Ascending aorta (tissue), 2 donors: ENCODE measurements at regions of chr1 and their contacts with region 1.

Region 1: GRCh38 chr1:202009326-202010179 is 834 bp upstream of the ELF3 start:
- DNase-seq: peak in 1 of 2 donors; percentile 91
- H3K4me3 ChIP-seq: no peak overlapping the region
- H3K27ac ChIP-seq: no peak overlapping the region
- H3K4me1 ChIP-seq: no peaks in the 10 kb centered on the region
- H3K27me3 ChIP-seq: no peaks in the 10 kb centered on the region
- CTCF ChIP-seq: peak; percentile 78 to 87 (median 78)

Region 2: GRCh38 chr1:202034683-202035462 is 25.3 kb after region 1 on chr1:
- intact Hi-C with region 1: loop called (anchors 2 kb)
- DNase-seq: peak; percentile 81 to 96
- H3K4me3 ChIP-seq: no peak overlapping the region
- H3K27ac ChIP-seq: peak overlapping the region; percentile 60 to 83
- H3K4me1 ChIP-seq: peaks cover 4 to 7% of the 10 kb centered on the region in 2 donors
- H3K27me3 ChIP-seq: no peaks in the 10 kb centered on the region
- CTCF ChIP-seq: no peak

Region 3: GRCh38 chr1:202122639-202123335 is 113.2 kb after region 1 on chr1 and contains the start of gene GPR37L1:
- intact Hi-C with region 1: loop called (anchors 1 kb)
- DNase-seq: peak in 1 of 2 donors; percentile 73
- H3K4me3 ChIP-seq: no peak within 1 kb of the TSS
- H3K27ac ChIP-seq: no peak within 1 kb of the TSS
- H3K4me1 ChIP-seq: no peaks in the 10 kb centered on the region
- H3K27me3 ChIP-seq: no peaks in the 10 kb centered on the region
- CTCF ChIP-seq: peak; percentile 35 to 64 (median 45)
- total RNA-seq, gene GPR37L1: not detected

Region 4: GRCh38 chr1:202135221-202135721 is 125.7 kb after region 1 on chr1:
- intact Hi-C with region 1: loop called (anchors 1 kb)
- DNase-seq: peak in 1 of 2 donors; percentile 75
- H3K4me3 ChIP-seq: no peak overlapping the region
- H3K27ac ChIP-seq: peak overlapping the region; percentile 39 to 69
- H3K4me1 ChIP-seq: peaks cover 11 to 24% of the 10 kb centered on the region in 2 donors
- H3K27me3 ChIP-seq: no peaks in the 10 kb centered on the region
- CTCF ChIP-seq: peak; percentile 71 to 92 (median 91)